IMR-90 (cell line): ENCODE measurements at regions of chr6 and their contacts with region 1.

Region 1: DNA sequence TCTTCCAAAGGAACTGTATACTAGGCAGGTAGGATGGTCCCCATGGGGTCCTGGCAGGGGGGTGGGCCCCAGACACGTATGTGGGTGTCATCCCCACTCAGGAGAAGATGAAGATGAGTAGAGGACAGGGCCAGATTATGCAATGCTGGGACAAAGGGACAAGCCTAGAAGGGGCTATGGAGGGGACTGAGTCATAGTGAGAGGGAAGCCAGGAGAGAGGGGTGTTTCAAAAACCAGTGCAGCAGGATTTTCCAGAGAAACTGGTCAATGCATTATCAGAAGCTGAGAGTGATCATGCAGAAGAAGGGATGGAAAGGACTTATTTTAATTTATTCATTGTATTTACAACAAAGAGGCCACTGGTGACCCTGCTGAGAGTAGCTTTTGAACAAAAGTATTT is 74.0 kb downstream of the PPP1R3G start:
- DNase-seq: no peak
- ATAC-seq: no peak
- H3K4me3 ChIP-seq: no peak overlapping the region
- H3K27ac ChIP-seq: no peak overlapping the region
- H3K4me1 ChIP-seq: no peaks in the 10 kb centered on the region; the same call in 1 of the 2 replicates
- H3K27me3 ChIP-seq: no peaks in the 10 kb centered on the region
- CTCF ChIP-seq: no peak
- POLR2A ChIP-seq: no peak
- RAD21 ChIP-seq: no peak

Region 2: GRCh38 chr6:4518506-4518905 is 640.6 kb before region 1 on chr6:
- CTCF ChIA-PET with region 1: no interaction called
- POLR2A ChIA-PET with region 1: no interaction called
- dilution Hi-C with region 1: no loop called
- in situ Hi-C with region 1: no loop called
- intact Hi-C with region 1: no loop called
- DNase-seq: peak; percentile 94
- ATAC-seq: peak; percentile 96
- H3K4me3 ChIP-seq: no peak overlapping the region
- H3K27ac ChIP-seq: no peak overlapping the region
- H3K4me1 ChIP-seq: no peaks in the 10 kb centered on the region
- H3K27me3 ChIP-seq: no peaks in the 10 kb centered on the region; the same call in none of the 2 replicates
- CTCF ChIP-seq: no peak
- POLR2A ChIP-seq: no peak
- RAD21 ChIP-seq: no peak

Region 3: DNA sequence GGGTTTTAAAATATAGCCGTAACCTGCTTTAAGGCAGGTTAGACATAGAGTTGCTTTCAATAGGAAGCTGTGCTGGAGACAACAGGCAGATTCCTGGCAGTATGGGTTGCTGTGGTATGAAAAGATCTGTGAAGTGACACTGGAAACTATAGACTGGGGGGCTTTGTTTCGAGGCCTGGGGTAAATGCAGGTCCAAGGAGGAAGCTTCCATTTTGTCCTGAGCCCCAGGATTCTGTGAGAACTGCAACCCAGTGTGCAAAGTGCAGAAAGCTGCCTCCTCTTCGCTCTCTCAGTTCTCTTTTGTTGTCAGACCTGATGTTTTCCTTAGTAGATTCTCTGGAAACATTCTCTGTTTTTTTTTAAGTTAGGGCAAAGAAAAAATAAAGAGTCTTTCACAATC is 14.7 kb after region 1 on chr6:
- CTCF ChIA-PET with region 1: no interaction called
- POLR2A ChIA-PET with region 1: interaction called, 15 read pairs
- dilution Hi-C with region 1: no loop called
- in situ Hi-C with region 1: no loop called
- intact Hi-C with region 1: no loop called
- DNase-seq: no peak
- ATAC-seq: no peak
- H3K4me3 ChIP-seq: no peak overlapping the region
- H3K27ac ChIP-seq: no peak overlapping the region
- H3K4me1 ChIP-seq: peaks cover 2% of the 10 kb centered on the region; the same call in 1 of the 2 replicates
- H3K27me3 ChIP-seq: no peaks in the 10 kb centered on the region
- CTCF ChIP-seq: no peak
- POLR2A ChIP-seq: no peak
- RAD21 ChIP-seq: no peak

Region 4: DNA sequence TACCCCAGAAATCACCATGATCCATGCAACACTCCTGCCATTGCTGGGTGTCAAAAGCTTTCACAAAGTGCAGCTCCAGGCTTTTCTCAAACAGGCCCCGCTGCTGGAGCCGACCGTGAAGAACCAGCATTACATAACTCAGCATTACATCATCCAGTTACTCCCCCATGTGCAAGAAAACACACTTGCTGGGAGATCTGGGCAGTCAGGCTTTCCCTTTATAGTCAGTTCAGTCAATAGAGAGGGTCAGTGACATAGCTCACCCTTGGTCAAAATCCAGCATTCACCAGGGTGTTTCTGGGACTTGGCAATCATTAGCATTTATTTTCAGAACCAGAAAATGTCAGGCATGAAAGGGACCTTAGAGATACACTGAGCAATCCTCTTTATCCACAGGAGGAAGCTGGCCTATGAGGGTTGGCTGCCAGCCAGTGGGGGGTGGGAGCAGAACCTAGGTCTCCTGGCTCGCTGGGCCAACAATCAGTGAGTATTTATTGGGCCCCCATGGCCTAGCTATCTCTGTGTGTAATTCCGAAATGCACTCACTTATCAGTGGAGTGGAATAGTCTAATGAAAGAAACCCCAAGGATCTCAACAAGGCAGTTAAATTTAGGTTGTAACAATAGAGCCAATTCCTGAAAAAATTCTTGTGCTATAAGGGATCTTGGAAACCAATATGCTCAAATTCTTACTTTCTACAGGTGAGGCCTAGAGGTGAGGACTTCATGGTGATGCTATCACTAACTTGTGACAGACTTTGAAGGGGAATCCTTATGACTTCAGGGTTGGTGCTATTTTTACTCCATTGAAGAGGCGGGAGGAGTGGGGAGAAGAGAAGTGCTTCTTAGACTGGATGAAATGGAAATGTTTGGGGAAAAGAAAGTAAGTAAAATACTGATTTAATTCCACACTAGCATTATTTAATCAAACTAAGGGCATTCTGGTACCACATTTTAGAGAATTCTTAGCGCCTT is 47.0 kb after region 1 on chr6:
- CTCF ChIA-PET with region 1: no interaction called
- POLR2A ChIA-PET with region 1: no interaction called
- dilution Hi-C with region 1: no loop called
- in situ Hi-C with region 1: no loop called
- intact Hi-C with region 1: loop called (anchors 5 kb)
- DNase-seq: peak; percentile 64
- ATAC-seq: peak; percentile 52
- H3K4me3 ChIP-seq: no peak overlapping the region
- H3K27ac ChIP-seq: no peak overlapping the region
- H3K4me1 ChIP-seq: peaks cover 10% of the 10 kb centered on the region
- H3K27me3 ChIP-seq: no peaks in the 10 kb centered on the region
- CTCF ChIP-seq: no peak
- POLR2A ChIP-seq: no peak
- RAD21 ChIP-seq: no peak